H1 (cell line): ENCODE measurements at regions of chr5 and their contacts with region 1.

Region 1: GRCh38 chr5:176660860-176661641 is 13.8 kb downstream of the TSPAN17 start:
- DNase-seq: peak; percentile 80 to 89
- H3K4me3 ChIP-seq: no peak overlapping the region
- H3K27ac ChIP-seq: no peak overlapping the region
- H3K4me1 ChIP-seq: peaks cover 0 to 12% (median 8%) of the 10 kb centered on the region in 4 experiments; a peak in 6 of 7 replicates
- H3K27me3 ChIP-seq: no peaks in the 10 kb centered on the region
- CTCF ChIP-seq: peak in 2 of 3 experiments; percentile 98 to 99; a peak in 3 of 4 replicates
- EP300 ChIP-seq: no peak
- POLR2A ChIP-seq: no peak
- RAD21 ChIP-seq: peak; percentile 100

Region 2: GRCh38 chr5:176675675-176676360 is 14.8 kb after region 1 on chr5:
- CTCF ChIA-PET with region 1: interaction called, 859 read pairs
- POLR2A ChIA-PET with region 1: interaction called, 4 read pairs
- DNase-seq: peak in 1 of 2 experiments; percentile 74
- H3K4me3 ChIP-seq: no peak overlapping the region
- H3K27ac ChIP-seq: no peak overlapping the region
- H3K4me1 ChIP-seq: peaks cover 0 to 17% (median 11%) of the 10 kb centered on the region in 4 experiments; a peak in 6 of 7 replicates
- H3K27me3 ChIP-seq: peaks cover 0 to 18% (median 17%) of the 10 kb centered on the region in 4 experiments; a peak in 6 of 7 replicates
- CTCF ChIP-seq: peak in 2 of 3 experiments; percentile 65 to 86; a peak in 3 of 4 replicates
- EP300 ChIP-seq: no peak
- POLR2A ChIP-seq: no peak
- RAD21 ChIP-seq: peak; percentile 39 to 56

Region 3: GRCh38 chr5:176754376-176754973 is 93.4 kb after region 1 on chr5:
- CTCF ChIA-PET with region 1: interaction called, 22 read pairs
- POLR2A ChIA-PET with region 1: no interaction called
- DNase-seq: no peak
- H3K4me3 ChIP-seq: no peak overlapping the region
- H3K27ac ChIP-seq: no peak overlapping the region
- H3K4me1 ChIP-seq: no peaks in the 10 kb centered on the region
- H3K27me3 ChIP-seq: no peaks in the 10 kb centered on the region
- CTCF ChIP-seq: no peak
- EP300 ChIP-seq: no peak
- POLR2A ChIP-seq: no peak
- RAD21 ChIP-seq: no peak

Region 4: DNA sequence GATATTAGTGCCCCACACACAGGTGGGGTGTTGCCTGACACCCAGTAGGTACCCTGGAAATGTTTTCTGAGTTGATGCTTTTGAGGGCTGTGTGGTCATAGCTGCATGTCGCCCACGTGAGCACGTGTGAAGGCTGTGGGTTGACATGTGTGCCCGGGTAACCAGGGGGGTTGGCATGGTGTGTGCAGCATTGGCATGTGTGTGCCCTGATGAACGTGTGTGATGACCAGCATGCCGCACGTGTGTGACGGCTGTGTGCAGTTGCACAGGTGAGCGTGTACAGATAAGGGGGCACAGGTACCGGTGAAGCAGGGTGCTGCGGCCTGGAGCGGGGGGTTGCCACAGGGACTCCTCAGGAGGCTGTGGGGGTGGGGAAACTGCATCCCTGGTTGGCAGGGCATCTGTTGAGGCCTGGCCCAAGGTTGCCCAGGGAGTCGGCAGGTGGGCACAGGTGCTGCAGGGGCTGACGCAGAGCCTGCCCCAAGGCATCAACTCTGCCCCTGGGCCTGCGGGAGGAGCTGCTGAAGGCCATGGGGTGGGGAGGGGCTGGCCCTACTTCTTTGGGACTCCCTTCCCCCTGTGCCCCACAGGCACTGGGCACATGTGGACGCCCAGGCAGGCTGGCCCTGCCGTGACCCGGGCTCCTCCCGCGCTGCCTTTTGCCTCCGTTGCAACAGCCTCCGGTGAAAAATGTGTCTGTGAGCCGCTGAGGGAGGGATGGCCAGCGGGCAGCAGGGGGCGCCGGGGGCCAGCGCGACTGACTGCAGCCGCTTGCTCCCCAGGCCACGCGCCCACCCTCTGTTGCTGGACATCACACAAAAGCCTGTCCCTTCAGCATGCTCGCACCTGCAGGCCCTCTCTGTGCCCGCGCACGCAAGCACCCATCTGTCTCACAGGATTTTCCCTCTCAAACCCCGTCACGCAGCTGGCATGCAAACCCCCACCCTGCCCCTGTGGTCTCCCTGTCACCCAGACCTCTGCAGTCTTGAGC is 151.5 kb after region 1 on chr5:
- CTCF ChIA-PET with region 1: interaction called, 38 read pairs
- POLR2A ChIA-PET with region 1: no interaction called
- DNase-seq: peak in 1 of 2 experiments; percentile 86
- H3K4me3 ChIP-seq: no peak overlapping the region
- H3K27ac ChIP-seq: no peak overlapping the region
- H3K4me1 ChIP-seq: peaks cover 0 to 49% (median 21%) of the 10 kb centered on the region in 4 experiments; a peak in 6 of 7 replicates
- H3K27me3 ChIP-seq: peaks cover 14 to 42% (median 41%) of the 10 kb centered on the region in 4 experiments
- CTCF ChIP-seq: peak in 2 of 3 experiments; percentile 76 to 77; a peak in 3 of 4 replicates
- EP300 ChIP-seq: no peak
- POLR2A ChIP-seq: no peak
- RAD21 ChIP-seq: peak; percentile 73 to 82

Region 5: GRCh38 chr5:176857216-176857893 is 196.3 kb after region 1 on chr5:
- CTCF ChIA-PET with region 1: interaction called, 17 read pairs
- POLR2A ChIA-PET with region 1: no interaction called
- DNase-seq: no peak
- H3K4me3 ChIP-seq: no peak overlapping the region
- H3K27ac ChIP-seq: no peak overlapping the region
- H3K4me1 ChIP-seq: peaks cover 0 to 5% (median 3%) of the 10 kb centered on the region in 4 experiments; a peak in 5 of 7 replicates
- H3K27me3 ChIP-seq: no peaks in the 10 kb centered on the region
- CTCF ChIP-seq: no peak
- EP300 ChIP-seq: no peak
- POLR2A ChIP-seq: no peak
- RAD21 ChIP-seq: no peak

Region 6: DNA sequence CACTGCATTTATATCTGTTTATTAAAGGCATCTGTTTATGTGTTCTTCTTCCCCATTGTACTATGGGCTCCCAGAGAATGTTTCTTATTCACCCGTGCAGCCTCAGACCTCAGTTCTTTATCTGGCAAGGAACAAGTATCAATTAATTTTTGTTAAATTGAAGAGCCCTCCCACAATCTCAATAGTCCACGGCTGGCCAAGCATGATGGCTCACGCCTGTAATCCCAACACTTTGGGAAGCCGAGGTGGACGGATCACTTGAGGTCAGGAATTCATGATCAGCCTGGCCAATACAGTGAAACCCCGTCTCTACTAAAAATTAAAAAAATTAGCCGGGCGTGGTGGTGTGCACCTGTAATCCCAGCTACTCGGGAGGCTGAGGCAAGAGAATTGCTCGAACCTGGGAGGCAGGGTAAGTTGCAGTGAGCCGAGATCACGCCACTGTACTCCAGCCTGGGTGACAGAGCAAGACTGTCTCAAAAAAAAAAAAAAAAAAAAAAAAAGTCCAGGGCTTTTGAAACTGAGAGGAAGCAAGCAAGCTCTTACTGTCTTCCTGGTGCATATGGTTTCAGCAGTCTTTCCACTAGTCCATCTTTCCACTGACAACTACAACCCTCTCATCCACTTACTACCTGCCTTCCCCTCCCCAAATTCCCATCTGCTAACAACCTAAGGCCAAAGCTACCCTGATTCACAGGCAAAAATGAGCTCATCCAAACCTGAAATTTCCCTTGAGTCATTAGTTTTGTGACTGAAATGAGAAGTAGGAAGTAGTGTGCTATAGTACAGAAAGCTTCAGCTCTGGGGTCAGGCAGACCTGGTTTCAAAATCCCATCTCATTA is 240.4 kb after region 1 on chr5:
- CTCF ChIA-PET with region 1: interaction called, 21 read pairs
- POLR2A ChIA-PET with region 1: interaction called, 4 read pairs
- DNase-seq: no peak
- H3K4me3 ChIP-seq: no peak overlapping the region
- H3K27ac ChIP-seq: no peak overlapping the region
- H3K4me1 ChIP-seq: peaks cover 0 to 6% (median 3%) of the 10 kb centered on the region in 4 experiments; a peak in 5 of 7 replicates
- H3K27me3 ChIP-seq: no peaks in the 10 kb centered on the region
- CTCF ChIP-seq: no peak
- EP300 ChIP-seq: no peak
- POLR2A ChIP-seq: no peak
- RAD21 ChIP-seq: no peak